Heart right ventricle (tissue), 16 donors: ENCODE measurements at regions of chrX and their contacts with region 1.

Region 1: DNA sequence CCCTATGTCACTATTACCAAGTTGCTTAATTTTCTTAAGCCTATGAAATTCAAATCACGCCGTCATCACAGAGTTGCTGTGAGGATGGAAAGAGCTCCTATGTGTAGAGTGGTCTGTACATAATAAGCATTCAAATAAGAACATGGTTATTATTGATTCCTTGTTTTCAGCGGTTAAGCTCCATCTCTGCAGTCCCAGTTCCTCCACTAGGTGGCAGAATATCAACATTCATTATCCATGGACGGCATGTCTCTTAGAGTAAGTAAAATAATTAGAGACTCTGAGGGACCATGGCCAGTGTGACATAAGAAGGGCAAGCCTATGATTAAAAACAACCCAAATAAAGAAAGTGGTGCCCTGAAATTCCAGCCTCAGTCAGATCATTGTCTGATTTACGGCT is 132.5 kb upstream of the NHS start:
- DNase-seq: peak in 1 of 2 donors; percentile 28
- ATAC-seq: peak in 2 of 8 donors; percentile 47 to 60
- H3K4me3 ChIP-seq: no peak overlapping the region
- H3K27ac ChIP-seq: no peak overlapping the region
- H3K4me1 ChIP-seq: no peaks in the 10 kb centered on the region
- H3K27me3 ChIP-seq: peaks cover 0 to 16% (median 0%) of the 10 kb centered on the region in 7 donors
- CTCF ChIP-seq: peak; percentile 43 to 82 (median 70)

Region 2: GRCh38 chrX:17187136-17187756 is 55.2 kb before region 1 on chrX:
- intact Hi-C with region 1: no loop called
- DNase-seq: peak in 1 of 2 donors; percentile 11
- ATAC-seq: peak in 2 of 8 donors; percentile 29 to 46
- H3K4me3 ChIP-seq: no peak overlapping the region
- H3K27ac ChIP-seq: no peak overlapping the region
- H3K4me1 ChIP-seq: no peaks in the 10 kb centered on the region
- H3K27me3 ChIP-seq: no peaks in the 10 kb centered on the region
- CTCF ChIP-seq: no peak

Region 3: GRCh38 chrX:17262123-17262522 is 19.7 kb after region 1 on chrX:
- intact Hi-C with region 1: loop called in 1 of 10 experiments (anchors 1 kb)
- DNase-seq: no peak
- ATAC-seq: no peak
- H3K4me3 ChIP-seq: no peak overlapping the region
- H3K27ac ChIP-seq: no peak overlapping the region
- H3K4me1 ChIP-seq: no peaks in the 10 kb centered on the region
- H3K27me3 ChIP-seq: no peaks in the 10 kb centered on the region
- CTCF ChIP-seq: no peak

Region 4: GRCh38 chrX:17535229-17535628 is 292.8 kb after region 1 on chrX:
- intact Hi-C with region 1: loop called in 1 of 10 experiments (anchors 5 kb)
- DNase-seq: peak in 1 of 2 donors; percentile 7
- ATAC-seq: peak in 1 of 8 donors; percentile 48
- H3K4me3 ChIP-seq: no peak overlapping the region
- H3K27ac ChIP-seq: no peak overlapping the region
- H3K4me1 ChIP-seq: no peaks in the 10 kb centered on the region
- H3K27me3 ChIP-seq: peaks cover 0 to 17% (median 0%) of the 10 kb centered on the region in 7 donors
- CTCF ChIP-seq: peak in 8 of 9 donors; percentile 21 to 51 (median 44)

Region 5: GRCh38 chrX:17590892-17591740 is 348.6 kb after region 1 on chrX:
- intact Hi-C with region 1: loop called in 8 of 10 experiments (anchors 1 to 10 kb)
- DNase-seq: peak; percentile 27 to 51
- ATAC-seq: peak; percentile 67 to 98 (median 88)
- H3K4me3 ChIP-seq: peak overlapping the region in 3 of 10 donors; percentile 10 to 24 (median 22)
- H3K27ac ChIP-seq: peak overlapping the region in 2 of 10 donors; percentile 15 to 25
- H3K4me1 ChIP-seq: peaks cover 0 to 19% (median 0%) of the 10 kb centered on the region in 9 donors
- H3K27me3 ChIP-seq: peaks cover 0 to 8% (median 0%) of the 10 kb centered on the region in 7 donors
- CTCF ChIP-seq: peak; percentile 52 to 76 (median 66)